Activated CD4-positive, alpha-beta memory T cell treated with anti-CD3 and anti-CD28 coated beads for 36 hours (primary cell): ENCODE measurements at regions of chr13 and their contacts with region 1.

Region 1: DNA sequence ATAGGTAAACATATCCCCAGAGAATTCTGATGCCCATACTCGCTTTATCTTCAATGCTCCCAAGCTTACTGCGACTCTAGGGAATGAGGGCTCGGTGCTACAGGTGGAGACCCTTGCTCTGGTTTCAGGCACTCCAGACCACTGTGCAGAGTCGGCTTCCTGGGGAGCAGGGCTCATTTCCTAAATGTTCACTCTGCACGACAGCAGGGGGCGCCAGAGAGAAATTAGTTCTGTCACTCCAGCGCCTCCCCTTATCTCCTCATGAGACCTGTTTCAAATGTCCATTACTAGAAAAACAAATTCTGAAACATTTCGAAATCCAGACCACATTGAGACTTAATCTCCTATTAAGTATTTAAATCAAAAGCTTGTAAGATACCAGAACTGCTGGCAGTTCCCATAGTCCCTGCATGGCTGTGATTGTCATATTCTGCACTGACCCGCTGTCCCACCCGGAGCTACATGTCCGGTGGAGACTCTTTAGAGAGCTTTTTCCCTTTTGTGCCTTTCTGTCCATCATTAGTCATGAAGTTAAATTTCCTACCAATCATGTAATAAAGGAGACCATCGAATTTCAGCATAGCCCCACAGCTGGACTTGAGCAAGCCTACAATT is 22.4 kb downstream of the EPSTI1 start:
- DNase-seq: peak; percentile 84
- H3K4me3 Mint-ChIP-seq: no peak overlapping the region
- H3K27ac Mint-ChIP-seq: no peak overlapping the region
- H3K4me1 Mint-ChIP-seq: peaks cover 17% of the 10 kb centered on the region
- H3K27me3 Mint-ChIP-seq: no peaks in the 10 kb centered on the region

Region 2: DNA sequence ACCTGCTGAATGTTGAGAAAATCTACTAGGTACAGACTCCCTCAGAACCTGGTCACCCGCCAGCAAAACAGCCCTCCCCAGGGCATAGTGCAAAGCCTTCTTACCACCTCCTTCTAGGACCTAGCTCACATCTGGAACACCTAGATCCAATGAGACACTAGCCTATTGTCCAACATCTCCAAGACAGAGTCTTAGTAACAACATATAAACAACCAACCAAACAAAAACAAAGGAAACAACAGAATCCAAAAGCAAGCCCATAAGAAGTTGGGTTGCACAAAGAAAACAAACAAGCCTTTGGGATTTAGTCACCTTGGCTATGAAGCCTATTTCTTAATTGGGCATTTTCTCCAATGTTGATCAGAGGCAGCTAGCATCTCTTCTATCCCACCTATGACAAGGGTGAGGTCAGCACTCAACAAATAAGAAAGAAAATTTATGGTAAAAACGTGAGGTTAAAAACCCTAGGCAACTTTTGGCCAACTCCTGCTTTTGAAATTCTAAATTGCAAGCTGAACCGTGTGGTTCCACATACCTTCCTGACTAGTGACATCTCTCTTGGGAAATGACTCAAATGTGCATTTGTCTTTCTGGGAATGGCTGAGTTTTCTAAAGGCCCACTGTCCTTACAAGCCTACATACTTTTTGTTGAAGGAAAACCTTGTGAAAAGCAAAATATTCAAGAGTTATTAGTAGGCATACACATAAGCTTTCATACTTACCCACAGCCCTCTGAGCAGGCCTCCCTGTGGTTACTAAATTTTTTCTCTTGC is 121.6 kb before region 1 on chr13:
- CTCF ChIA-PET with region 1: no interaction called
- POLR2A ChIA-PET with region 1: no interaction called
- intact Hi-C with region 1: no loop called
- DNase-seq: no peak
- H3K4me3 Mint-ChIP-seq: no peak overlapping the region
- H3K27ac Mint-ChIP-seq: no peak overlapping the region
- H3K4me1 Mint-ChIP-seq: no peaks in the 10 kb centered on the region
- H3K27me3 Mint-ChIP-seq: peaks cover 2% of the 10 kb centered on the region

Region 3: GRCh38 chr13:42991892-42992763 is 22.5 kb after region 1 on chr13 and contains the start of gene EPSTI1:
- CTCF ChIA-PET with region 1: interaction called, 11 read pairs
- POLR2A ChIA-PET with region 1: no interaction called
- intact Hi-C with region 1: loop called (anchors 1 kb)
- DNase-seq: peak; percentile 84
- H3K4me3 Mint-ChIP-seq: peak within 1 kb of the TSS; percentile 86
- H3K27ac Mint-ChIP-seq: peak within 1 kb of the TSS; percentile 97
- H3K4me1 Mint-ChIP-seq: peaks cover 43% of the 10 kb centered on the region
- H3K27me3 Mint-ChIP-seq: no peaks in the 10 kb centered on the region
- total RNA-seq, gene EPSTI1: 21.1 to 21.9 TPM

Region 4: GRCh38 chr13:43061496-43062265 is 92.0 kb after region 1 on chr13:
- CTCF ChIA-PET with region 1: interaction called, 3 read pairs
- POLR2A ChIA-PET with region 1: no interaction called
- intact Hi-C with region 1: loop called (anchors 5 kb)
- DNase-seq: peak; percentile 29
- H3K4me3 Mint-ChIP-seq: no peak overlapping the region
- H3K27ac Mint-ChIP-seq: peak overlapping the region; percentile 3
- H3K4me1 Mint-ChIP-seq: peaks cover 46% of the 10 kb centered on the region
- H3K27me3 Mint-ChIP-seq: no peaks in the 10 kb centered on the region

Region 5: DNA sequence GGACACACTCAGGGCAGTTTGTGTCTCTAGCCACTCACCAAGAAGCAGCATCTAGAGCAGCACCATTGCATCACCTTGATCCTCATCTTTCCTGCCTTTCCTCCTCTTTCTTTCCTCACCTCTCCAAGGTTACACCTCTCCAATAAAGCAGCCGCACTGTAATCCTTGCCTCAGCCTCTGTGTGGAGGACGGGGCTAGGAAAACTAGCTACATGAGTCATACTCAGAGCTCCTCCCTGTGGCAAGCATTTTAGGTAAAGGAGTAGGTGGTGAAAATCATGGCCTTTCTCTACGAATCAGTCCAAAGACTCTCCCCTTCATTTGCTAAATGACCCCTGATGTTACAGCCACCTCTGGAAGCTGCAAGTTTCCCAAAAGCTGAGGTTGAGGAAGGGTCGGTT is 162.6 kb after region 1 on chr13:
- CTCF ChIA-PET with region 1: interaction called, 4 read pairs
- POLR2A ChIA-PET with region 1: no interaction called
- intact Hi-C with region 1: loop called (anchors 1 kb)
- DNase-seq: no peak
- H3K4me3 Mint-ChIP-seq: no peak overlapping the region
- H3K27ac Mint-ChIP-seq: no peak overlapping the region
- H3K4me1 Mint-ChIP-seq: peaks cover 8% of the 10 kb centered on the region
- H3K27me3 Mint-ChIP-seq: peaks cover 6% of the 10 kb centered on the region

Region 6: GRCh38 chr13:43289470-43290255 is 320.0 kb after region 1 on chr13:
- CTCF ChIA-PET with region 1: no interaction called
- POLR2A ChIA-PET with region 1: no interaction called
- intact Hi-C with region 1: no loop called
- DNase-seq: no peak
- H3K4me3 Mint-ChIP-seq: no peak overlapping the region
- H3K27ac Mint-ChIP-seq: no peak overlapping the region
- H3K4me1 Mint-ChIP-seq: no peaks in the 10 kb centered on the region
- H3K27me3 Mint-ChIP-seq: peaks cover 1% of the 10 kb centered on the region

Region 7: DNA sequence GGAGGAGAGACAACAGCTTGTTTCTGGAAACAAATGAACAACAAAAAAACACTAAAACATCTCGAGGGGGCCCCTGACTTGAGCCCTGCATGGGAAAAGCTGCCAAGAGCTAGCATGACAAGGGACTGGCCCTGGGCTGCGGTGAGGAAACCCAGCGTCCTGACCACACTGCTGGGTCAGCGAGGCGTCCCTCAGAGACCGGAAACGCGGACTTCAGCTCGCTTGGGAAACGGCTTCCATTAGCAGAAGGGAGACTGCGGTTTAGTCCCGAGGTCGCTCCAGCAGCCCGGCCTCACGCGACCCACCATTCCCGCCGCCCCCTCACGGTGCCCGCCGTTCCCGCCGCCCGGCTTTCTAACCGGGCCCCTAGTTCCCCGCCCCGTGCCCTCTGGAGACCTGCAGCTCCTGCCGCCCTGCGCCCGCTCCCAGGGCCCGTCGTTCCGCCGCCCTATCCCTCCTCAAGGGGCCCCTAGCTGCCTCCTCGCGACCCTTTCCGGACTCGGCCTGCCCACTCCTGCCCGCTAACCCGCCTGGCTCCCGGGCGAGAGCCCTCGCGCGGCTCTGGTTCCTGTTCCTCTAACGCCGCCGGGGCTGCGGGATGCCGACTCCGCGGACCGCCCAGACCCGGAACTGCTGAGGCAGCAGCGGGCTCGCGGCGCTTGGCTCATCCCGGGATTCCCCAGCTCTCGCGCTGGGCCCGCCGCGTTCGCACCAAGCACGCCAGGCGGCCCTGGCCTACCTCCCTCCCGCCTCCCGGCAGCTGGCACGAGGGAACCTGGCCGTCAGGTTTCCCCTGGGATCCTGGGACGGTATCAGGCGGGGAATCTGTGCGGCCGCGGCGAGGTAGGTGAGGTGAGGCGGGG is 909.5 kb after region 1 on chr13 and contains the start of gene CCDC122:
- CTCF ChIA-PET with region 1: interaction called, 15 read pairs
- POLR2A ChIA-PET with region 1: no interaction called
- intact Hi-C with region 1: loop called (anchors 1 kb)
- DNase-seq: peak; percentile 87
- H3K4me3 Mint-ChIP-seq: peak within 1 kb of the TSS; percentile 85
- H3K27ac Mint-ChIP-seq: peak within 1 kb of the TSS; percentile 87
- H3K4me1 Mint-ChIP-seq: peaks cover 23% of the 10 kb centered on the region
- H3K27me3 Mint-ChIP-seq: peaks cover 2% of the 10 kb centered on the region
- total RNA-seq, gene CCDC122: 2.0 to 2.5 TPM